ENCODE measurements at regions of chr6 and their contacts with region 1.

Region 1: DNA sequence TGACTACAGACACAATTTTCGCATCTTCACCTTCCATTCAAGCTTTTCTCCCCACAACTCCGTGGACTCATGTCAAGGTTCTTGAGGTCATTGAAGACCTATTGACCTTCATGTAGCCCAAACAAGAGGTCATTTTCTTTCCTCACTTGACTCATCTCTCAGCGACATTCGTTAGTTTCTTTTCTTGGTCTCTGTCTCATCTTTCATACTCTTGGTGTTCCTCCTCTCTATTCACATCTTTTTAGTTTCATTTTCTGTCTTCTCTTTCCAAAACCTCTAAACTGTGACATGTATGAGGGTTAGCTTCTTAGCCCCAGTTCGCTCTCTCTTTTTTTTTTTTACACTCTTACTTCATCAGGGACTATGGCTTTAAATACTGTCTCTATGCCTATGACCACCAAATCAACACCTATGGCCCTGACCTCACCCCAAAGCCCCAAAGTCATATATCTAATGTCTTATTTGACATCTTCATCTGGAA is 128.6 kb upstream of the BACH2 start:
- DNase-seq: peak in 2 of 9 experiments; percentile 58 to 72
- ATAC-seq: peak; percentile 90
- H3K4me3 ChIP-seq: peak overlapping the region; percentile 37 to 42
- H3K4me3 Mint-ChIP-seq: peak overlapping the region; percentile 72
- H3K27ac ChIP-seq: peak overlapping the region; percentile 35 to 77
- H3K27ac Mint-ChIP-seq: peak overlapping the region; percentile 90
- H3K4me1 ChIP-seq: peaks cover 16% of the 10 kb centered on the region
- H3K4me1 Mint-ChIP-seq: peaks cover 17% of the 10 kb centered on the region
- H3K27me3 ChIP-seq: no peaks in the 10 kb centered on the region
- H3K27me3 Mint-ChIP-seq: no peaks in the 10 kb centered on the region
- CTCF ChIP-seq: no peak

Region 2: GRCh38 chr6:90413867-90414266 is 11.3 kb before region 1 on chr6:
- CTCF ChIA-PET with region 1: interaction called, 4 read pairs
- POLR2A ChIA-PET with region 1: interaction called, 25 read pairs
- intact Hi-C with region 1: no loop called
- DNase-seq: peak; percentile 57 to 92 (median 72)
- ATAC-seq: peak; percentile 84
- H3K4me3 ChIP-seq: peak overlapping the region; percentile 3 to 24
- H3K4me3 Mint-ChIP-seq: peak overlapping the region; percentile 79
- H3K27ac ChIP-seq: peak overlapping the region in 1 of 2 experiments; percentile 62
- H3K27ac Mint-ChIP-seq: peak overlapping the region; percentile 89
- H3K4me1 ChIP-seq: peaks cover 18% of the 10 kb centered on the region
- H3K4me1 Mint-ChIP-seq: peaks cover 33% of the 10 kb centered on the region
- H3K27me3 ChIP-seq: no peaks in the 10 kb centered on the region
- H3K27me3 Mint-ChIP-seq: no peaks in the 10 kb centered on the region
- CTCF ChIP-seq: no peak

Region 3: GRCh38 chr6:90472744-90473143 is 47.5 kb after region 1 on chr6:
- CTCF ChIA-PET with region 1: no interaction called
- POLR2A ChIA-PET with region 1: no interaction called
- intact Hi-C with region 1: loop called in 1 of 2 experiments (anchors 5 kb)
- DNase-seq: peak in 4 of 9 experiments; percentile 20 to 64 (median 32)
- ATAC-seq: peak; percentile 47
- H3K4me3 ChIP-seq: peak overlapping the region in 1 of 2 experiments; percentile 9
- H3K4me3 Mint-ChIP-seq: peak overlapping the region; percentile 76
- H3K27ac ChIP-seq: no peak overlapping the region
- H3K27ac Mint-ChIP-seq: no peak overlapping the region
- H3K4me1 ChIP-seq: peaks cover 32% of the 10 kb centered on the region
- H3K4me1 Mint-ChIP-seq: peaks cover 40% of the 10 kb centered on the region
- H3K27me3 ChIP-seq: no peaks in the 10 kb centered on the region
- H3K27me3 Mint-ChIP-seq: no peaks in the 10 kb centered on the region
- CTCF ChIP-seq: no peak

Measured in CD8-positive, alpha-beta T cell (primary cell).